PC-3 (cell line): ENCODE measurements at regions of chr1 and their contacts with region 1.

Region 1: GRCh38 chr1:94258873-94259331 is 21.5 kb upstream of the ARHGAP29 start:
- DNase-seq: peak; percentile 99
- ATAC-seq: peak; percentile 69
- H3K4me3 ChIP-seq: no peak overlapping the region
- H3K27ac ChIP-seq: peak overlapping the region; percentile 98
- H3K4me1 ChIP-seq: peaks cover 64% of the 10 kb centered on the region
- H3K27me3 ChIP-seq: no peaks in the 10 kb centered on the region
- CTCF ChIP-seq: no peak

Region 2: DNA sequence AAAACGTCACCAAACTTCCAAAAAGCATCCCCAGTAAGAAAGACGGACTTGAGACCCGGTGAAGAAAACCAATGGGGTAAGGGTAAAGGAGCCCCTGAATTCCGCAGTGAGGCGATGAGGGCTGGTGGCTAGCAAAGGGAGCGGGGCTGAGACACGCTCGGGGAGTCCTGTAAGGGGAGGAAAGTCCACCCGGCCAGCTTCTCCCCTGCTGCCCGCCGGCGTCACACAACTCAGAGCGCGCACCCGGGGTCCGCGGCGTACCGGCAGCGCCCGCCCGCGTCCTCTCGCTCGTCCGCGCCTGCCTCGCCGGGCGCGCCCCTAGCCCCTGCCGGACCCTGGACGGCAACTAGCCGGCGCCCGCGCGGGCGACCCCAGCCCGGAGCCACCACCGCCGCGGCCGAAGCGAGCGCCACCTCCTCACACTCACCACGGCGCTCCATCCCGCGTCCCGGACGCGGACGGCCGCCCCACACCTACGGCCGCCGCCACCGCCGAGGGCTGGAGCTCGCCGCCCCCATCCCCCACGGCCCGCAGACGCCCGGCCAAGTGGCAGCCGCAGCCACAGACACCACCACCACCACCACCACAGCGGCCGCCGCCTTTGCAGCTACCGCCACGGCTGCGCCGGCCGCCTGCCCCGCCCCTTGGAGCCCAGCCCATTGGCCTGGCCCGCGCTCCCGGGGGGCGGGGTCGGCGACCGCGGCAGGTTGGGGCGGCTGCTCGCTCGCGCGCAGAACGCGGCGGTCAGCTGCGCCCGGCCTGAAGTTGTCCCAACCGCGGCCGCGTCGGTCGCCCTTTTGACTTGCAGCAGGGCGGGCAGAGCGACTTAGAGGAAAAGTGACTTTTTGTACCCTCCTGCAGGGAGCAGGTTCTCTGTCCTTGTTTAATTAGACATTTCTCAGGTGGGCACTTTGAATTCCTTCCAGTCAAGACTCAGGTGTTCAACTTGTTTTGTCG is 11.5 kb before region 1 on chr1:
- CTCF ChIA-PET with region 1: no interaction called
- POLR2A ChIA-PET with region 1: interaction called, 6 read pairs
- intact Hi-C with region 1: loop called (anchors 1 kb)
- DNase-seq: peak; percentile 92
- ATAC-seq: peak; percentile 60
- H3K4me3 ChIP-seq: peak overlapping the region; percentile 96
- H3K27ac ChIP-seq: peak overlapping the region; percentile 92
- H3K4me1 ChIP-seq: peaks cover 41% of the 10 kb centered on the region
- H3K27me3 ChIP-seq: no peaks in the 10 kb centered on the region
- CTCF ChIP-seq: no peak

Region 3: GRCh38 chr1:94284476-94284875 is 25.6 kb after region 1 on chr1:
- CTCF ChIA-PET with region 1: interaction called, 11 read pairs
- POLR2A ChIA-PET with region 1: no interaction called
- intact Hi-C with region 1: loop called (anchors 1 kb)
- DNase-seq: no peak
- ATAC-seq: no peak
- H3K4me3 ChIP-seq: no peak overlapping the region
- H3K27ac ChIP-seq: peak overlapping the region; percentile 48; the same call in 1 of the 2 replicates
- H3K4me1 ChIP-seq: peaks cover 49% of the 10 kb centered on the region
- H3K27me3 ChIP-seq: no peaks in the 10 kb centered on the region
- CTCF ChIP-seq: no peak

Region 4: GRCh38 chr1:94322696-94323095 is 63.8 kb after region 1 on chr1:
- CTCF ChIA-PET with region 1: interaction called, 4 read pairs
- POLR2A ChIA-PET with region 1: interaction called, 24 read pairs
- intact Hi-C with region 1: loop called (anchors 1 kb)
- DNase-seq: peak; percentile 94
- ATAC-seq: peak; percentile 41
- H3K4me3 ChIP-seq: peak overlapping the region; percentile 51
- H3K27ac ChIP-seq: peak overlapping the region; percentile 98
- H3K4me1 ChIP-seq: peaks cover 83% of the 10 kb centered on the region
- H3K27me3 ChIP-seq: no peaks in the 10 kb centered on the region
- CTCF ChIP-seq: no peak